ENCODE measurements at regions of chr21 and their contacts with region 1.

Region 1: GRCh38 chr21:30831194-30831765 is 1.7 kb upstream of the KRTAP7-1 start:
- ATAC-seq: peak in 2 of 8 experiments; percentile 32 to 54
- H3K4me3 ChIP-seq: no peak overlapping the region
- H3K27ac ChIP-seq: no peak overlapping the region
- H3K4me1 ChIP-seq: no peaks in the 10 kb centered on the region

Region 2: GRCh38 chr21:31084689-31085088 is 253.4 kb after region 1 on chr21:
- in situ Hi-C with region 1: loop called in 2 of 9 experiments (anchors 5 to 25 kb)
- ATAC-seq: no peak
- H3K4me3 ChIP-seq: no peak overlapping the region
- H3K27ac ChIP-seq: no peak overlapping the region
- H3K4me1 ChIP-seq: no peaks in the 10 kb centered on the region

Measured in motor neuron (in vitro differentiated cells).